ENCODE measurements at regions of chr20 and their contacts with region 1.

Region 1: GRCh38 chr20:62302341-62303058 is at the start of gene ADRM1:
- DNase-seq: peak; percentile 97
- H3K4me3 Mint-ChIP-seq: peak within 1 kb of the TSS; percentile 91
- H3K27ac Mint-ChIP-seq: peak within 1 kb of the TSS; percentile 97
- H3K4me1 Mint-ChIP-seq: peaks cover 29% of the 10 kb centered on the region
- H3K27me3 Mint-ChIP-seq: no peaks in the 10 kb centered on the region
- total RNA-seq, gene ADRM1: 98.6 to 101 TPM

Region 2: DNA sequence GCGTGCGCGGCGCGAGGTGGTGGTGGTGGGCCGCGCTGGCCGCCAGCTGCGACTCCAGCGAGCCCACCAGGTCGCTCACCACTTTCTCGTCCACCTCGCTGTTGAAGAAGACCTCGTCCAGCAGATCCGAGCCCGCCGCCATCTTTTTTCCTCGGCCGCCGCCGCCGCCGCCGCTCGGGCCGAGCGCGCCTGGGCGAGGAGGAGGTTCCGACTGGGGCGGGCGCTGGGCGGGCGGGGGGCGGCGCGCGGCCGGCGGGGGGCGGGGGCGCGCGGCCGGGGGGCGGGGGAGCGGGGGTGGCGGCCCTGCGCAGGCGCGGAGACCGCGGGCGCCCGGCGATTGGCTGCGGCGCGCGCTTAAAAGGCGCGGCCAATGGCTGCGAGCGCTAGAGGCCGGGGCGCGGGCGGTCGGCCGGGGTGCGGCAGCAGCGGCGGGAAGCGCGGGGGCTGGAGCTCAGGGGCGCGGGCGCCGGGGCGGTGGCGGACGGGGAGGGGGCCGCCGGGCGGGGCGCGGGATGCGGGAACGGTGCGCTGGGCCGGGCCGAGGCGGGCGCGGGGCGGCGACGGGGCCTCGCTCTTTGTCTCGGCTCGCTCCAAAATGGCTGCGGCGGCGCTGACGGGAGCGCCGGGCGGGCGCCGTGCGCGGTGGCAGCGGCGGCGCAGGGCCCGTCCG is 236.7 kb before region 1 on chr20 and contains the start of gene TAF4:
- CTCF ChIA-PET with region 1: no interaction called
- POLR2A ChIA-PET with region 1: no interaction called
- intact Hi-C with region 1: loop called (anchors 5 kb)
- DNase-seq: peak; percentile 83
- H3K4me3 Mint-ChIP-seq: peak within 1 kb of the TSS; percentile 79
- H3K27ac Mint-ChIP-seq: peak within 1 kb of the TSS; percentile 71
- H3K4me1 Mint-ChIP-seq: peaks cover 48% of the 10 kb centered on the region
- H3K27me3 Mint-ChIP-seq: no peaks in the 10 kb centered on the region
- total RNA-seq, gene TAF4: 15.3 to 17.0 TPM

Region 3: GRCh38 chr20:62237801-62238571 is 64.5 kb before region 1 on chr20 and contains the start of gene OSBPL2:
- CTCF ChIA-PET with region 1: interaction called, 4 read pairs
- POLR2A ChIA-PET with region 1: no interaction called
- intact Hi-C with region 1: loop called (anchors 1 kb)
- DNase-seq: peak; percentile 100
- H3K4me3 Mint-ChIP-seq: peak within 1 kb of the TSS; percentile 78
- H3K27ac Mint-ChIP-seq: peak within 1 kb of the TSS; percentile 80
- H3K4me1 Mint-ChIP-seq: peaks cover 37% of the 10 kb centered on the region
- H3K27me3 Mint-ChIP-seq: no peaks in the 10 kb centered on the region
- total RNA-seq, gene OSBPL2: 25.4 to 29.3 TPM

Region 4: GRCh38 chr20:62258499-62259293 is 43.8 kb before region 1 on chr20:
- CTCF ChIA-PET with region 1: no interaction called
- POLR2A ChIA-PET with region 1: no interaction called
- intact Hi-C with region 1: no loop called
- DNase-seq: no peak
- H3K4me3 Mint-ChIP-seq: no peak overlapping the region
- H3K27ac Mint-ChIP-seq: no peak overlapping the region
- H3K4me1 Mint-ChIP-seq: no peaks in the 10 kb centered on the region
- H3K27me3 Mint-ChIP-seq: no peaks in the 10 kb centered on the region

Region 5: DNA sequence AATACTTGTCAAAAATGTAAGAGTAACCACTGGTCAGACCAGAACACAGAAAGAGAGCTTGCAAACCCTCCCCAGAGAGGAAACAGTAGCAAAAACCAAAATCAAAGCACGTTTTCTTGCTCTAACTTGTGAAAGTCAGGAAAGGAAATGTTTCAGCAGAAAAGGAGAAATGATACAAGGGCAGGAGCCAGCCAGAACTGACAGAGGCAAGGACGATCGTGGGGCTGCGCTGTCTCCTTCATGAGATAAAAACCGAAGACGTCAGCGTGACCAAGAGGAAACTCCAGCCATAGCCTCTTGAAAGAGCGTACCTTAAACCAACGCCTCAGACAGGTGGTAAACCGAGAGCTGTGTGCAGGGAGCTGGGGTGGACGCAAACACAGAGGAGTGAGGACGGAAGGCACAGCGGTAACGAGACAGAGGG is 37.2 kb after region 1 on chr20:
- CTCF ChIA-PET with region 1: no interaction called
- POLR2A ChIA-PET with region 1: no interaction called
- intact Hi-C with region 1: no loop called
- DNase-seq: no peak
- H3K4me3 Mint-ChIP-seq: no peak overlapping the region
- H3K27ac Mint-ChIP-seq: no peak overlapping the region
- H3K4me1 Mint-ChIP-seq: no peaks in the 10 kb centered on the region
- H3K27me3 Mint-ChIP-seq: peaks cover 18% of the 10 kb centered on the region

Region 6: GRCh38 chr20:62407221-62407992 is 104.9 kb after region 1 on chr20 and contains the start of gene CABLES2:
- CTCF ChIA-PET with region 1: no interaction called
- POLR2A ChIA-PET with region 1: no interaction called
- intact Hi-C with region 1: loop called (anchors 1 kb)
- DNase-seq: peak; percentile 95
- H3K4me3 Mint-ChIP-seq: peak within 1 kb of the TSS; percentile 78
- H3K27ac Mint-ChIP-seq: peak within 1 kb of the TSS; percentile 69
- H3K4me1 Mint-ChIP-seq: peaks cover 23% of the 10 kb centered on the region
- H3K27me3 Mint-ChIP-seq: no peaks in the 10 kb centered on the region
- total RNA-seq, gene CABLES2: 7.8 to 8.2 TPM

Region 7: DNA sequence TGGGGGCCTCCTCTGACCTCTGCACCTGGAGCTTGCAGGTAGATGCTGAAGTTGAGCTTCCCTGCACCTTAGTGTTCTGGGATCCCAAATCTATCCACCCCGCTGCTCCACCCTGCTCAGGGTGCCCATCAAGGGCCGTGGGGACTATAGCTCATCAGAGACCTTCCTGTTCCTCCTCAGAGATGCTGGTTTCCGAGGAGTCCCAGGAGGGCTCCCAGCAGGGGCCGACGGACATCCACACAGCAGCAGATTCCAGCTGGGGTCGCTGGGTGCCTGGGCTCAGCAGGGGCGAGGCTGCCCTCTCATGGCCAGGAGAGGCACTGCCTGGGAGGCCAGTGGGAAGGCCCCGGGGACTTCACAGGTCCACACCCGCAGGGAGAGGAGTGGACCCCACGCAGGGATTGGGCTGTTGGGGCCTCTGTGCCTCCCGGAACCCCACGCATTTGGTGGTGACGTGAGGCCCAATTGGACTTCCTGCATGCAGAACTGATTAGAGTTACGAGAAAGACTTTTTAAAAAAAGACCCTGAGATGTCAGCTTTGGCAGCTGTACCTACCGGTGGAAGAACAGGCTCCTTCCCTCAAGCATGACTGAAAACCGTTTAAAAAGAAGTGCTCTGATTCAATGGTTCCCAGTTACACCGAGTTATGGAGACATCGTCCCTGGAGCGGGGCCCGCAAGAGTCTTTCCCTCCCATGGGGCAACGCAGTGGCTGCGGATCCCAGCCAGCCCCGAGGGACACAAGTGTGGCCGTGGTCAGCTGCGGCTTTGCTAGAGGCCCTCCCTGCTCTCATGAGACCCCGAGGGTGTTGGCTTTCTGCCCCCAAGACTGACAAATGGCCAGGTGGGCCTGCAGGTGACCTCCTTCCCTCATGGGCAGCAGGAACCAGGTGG is 314.5 kb after region 1 on chr20:
- CTCF ChIA-PET with region 1: interaction called, 10 read pairs
- POLR2A ChIA-PET with region 1: no interaction called
- intact Hi-C with region 1: loop called (anchors 5 kb)
- DNase-seq: peak; percentile 84
- H3K4me3 Mint-ChIP-seq: peak overlapping the region; percentile 48
- H3K27ac Mint-ChIP-seq: peak overlapping the region; percentile 90
- H3K4me1 Mint-ChIP-seq: peaks cover 28% of the 10 kb centered on the region
- H3K27me3 Mint-ChIP-seq: no peaks in the 10 kb centered on the region

Measured in activated CD4-positive, alpha-beta memory T cell treated with anti-CD3 and anti-CD28 coated beads for 36 hours (primary cell).